Activated CD4-positive, alpha-beta T cell treated with anti-CD3 and anti-CD28 coated beads for 36 hours (primary cell): ENCODE measurements at regions of chr22 and their contacts with region 1.

Region 1: GRCh38 chr22:30423982-30424963 is 1.3 kb upstream of the MTFP1 start:
- DNase-seq: peak; percentile 99
- ATAC-seq: peak; percentile 85
- H3K4me3 Mint-ChIP-seq: peak overlapping the region; percentile 93
- H3K27ac Mint-ChIP-seq: peak overlapping the region; percentile 97
- H3K4me1 Mint-ChIP-seq: peaks cover 49% of the 10 kb centered on the region
- H3K27me3 Mint-ChIP-seq: no peaks in the 10 kb centered on the region

Region 2: DNA sequence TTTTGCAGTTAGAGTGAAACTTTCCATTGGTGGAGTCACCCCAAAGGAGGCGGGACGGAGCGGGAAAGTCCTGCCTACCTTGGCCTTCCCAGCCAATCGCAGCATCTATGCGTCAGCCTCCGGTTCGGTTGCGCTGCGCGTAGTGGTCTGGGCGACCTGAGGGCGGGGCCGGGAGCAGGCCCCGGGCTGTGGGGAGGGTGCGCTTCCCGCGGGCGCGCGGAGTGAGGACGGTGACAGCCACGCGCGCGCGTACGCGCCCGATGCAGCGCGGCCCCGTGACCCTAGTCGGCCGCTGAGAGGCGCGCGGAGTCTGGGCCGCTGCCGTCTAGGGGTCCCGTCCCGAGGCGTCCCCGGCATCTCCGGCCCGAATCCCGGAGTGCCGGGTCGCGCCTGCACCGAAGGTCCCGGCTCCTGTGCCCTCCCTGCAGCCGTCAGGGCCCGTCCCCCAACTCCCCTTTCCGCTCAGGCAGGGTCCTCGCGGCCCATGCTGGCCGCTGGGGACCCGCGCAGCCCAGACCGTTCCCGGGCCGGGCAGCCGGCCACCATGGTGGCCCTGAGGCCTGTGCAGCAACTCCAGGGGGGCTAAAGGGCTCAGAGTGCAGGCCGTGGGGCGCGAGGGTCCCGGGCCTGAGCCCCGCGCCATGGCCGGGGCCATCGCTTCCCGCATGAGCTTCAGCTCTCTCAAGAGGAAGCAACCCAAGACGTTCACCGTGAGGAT is 820.8 kb before region 1 on chr22 and contains the start of gene NF2:
- CTCF ChIA-PET with region 1: interaction called, 3 read pairs
- POLR2A ChIA-PET with region 1: no interaction called
- intact Hi-C with region 1: loop called in 1 of 2 experiments (anchors 5 kb)
- DNase-seq: peak; percentile 99
- ATAC-seq: peak; percentile 97
- H3K4me3 Mint-ChIP-seq: peak within 1 kb of the TSS; percentile 92
- H3K27ac Mint-ChIP-seq: peak within 1 kb of the TSS; percentile 97
- H3K4me1 Mint-ChIP-seq: peaks cover 29% of the 10 kb centered on the region
- H3K27me3 Mint-ChIP-seq: no peaks in the 10 kb centered on the region
- total RNA-seq, gene NF2: 40.2 to 43.1 TPM

Region 3: GRCh38 chr22:30289134-30289979 is 134.9 kb before region 1 on chr22 and contains the start of gene CASTOR1:
- CTCF ChIA-PET with region 1: interaction called, 50 read pairs
- POLR2A ChIA-PET with region 1: no interaction called
- intact Hi-C with region 1: loop called in 1 of 2 experiments (anchors 1 kb)
- DNase-seq: peak; percentile 93
- ATAC-seq: peak; percentile 88
- H3K4me3 Mint-ChIP-seq: peak within 1 kb of the TSS; percentile 72
- H3K27ac Mint-ChIP-seq: peak within 1 kb of the TSS; percentile 72
- H3K4me1 Mint-ChIP-seq: peaks cover 23% of the 10 kb centered on the region
- H3K27me3 Mint-ChIP-seq: no peaks in the 10 kb centered on the region
- total RNA-seq, gene CASTOR1: 1.6 to 2.2 TPM

Region 4: DNA sequence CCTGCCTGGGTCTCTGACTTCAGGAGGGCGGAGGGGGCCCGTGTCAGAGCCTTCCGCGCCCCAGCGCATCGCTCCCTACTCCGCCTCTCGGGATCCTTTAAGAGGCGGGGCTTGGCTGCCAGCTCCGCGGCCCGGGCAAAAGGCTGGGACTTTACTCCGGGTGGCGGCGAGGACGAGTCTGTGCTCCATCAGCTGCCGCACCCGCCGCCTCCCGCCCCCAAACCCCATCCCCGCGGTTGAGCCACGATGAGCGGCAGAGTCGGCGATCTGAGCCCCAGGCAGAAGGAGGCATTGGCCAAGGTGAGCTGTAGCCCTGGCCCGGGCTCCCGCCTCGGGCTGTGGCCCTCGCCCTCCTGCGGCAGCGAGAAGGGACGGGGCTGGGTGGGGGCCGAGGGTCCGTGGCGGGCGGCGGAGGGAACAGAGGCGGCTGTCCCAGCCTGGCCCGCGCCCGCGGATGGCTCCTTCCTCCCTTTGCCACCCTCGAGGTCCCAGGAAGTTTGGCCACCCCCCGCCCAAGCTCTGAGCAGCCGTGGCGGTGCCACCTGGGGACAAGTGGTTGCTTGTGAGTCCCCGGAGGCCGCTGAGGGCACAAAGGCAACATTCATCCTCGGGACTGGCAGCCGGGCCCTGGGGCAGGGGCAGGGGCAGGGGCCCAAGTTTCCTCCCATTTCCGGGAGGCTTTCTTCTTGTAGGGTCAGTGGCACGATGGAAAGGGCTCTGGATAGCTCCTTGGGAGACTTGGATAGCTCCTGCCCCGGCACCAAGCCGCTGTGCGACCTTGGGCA is 27.2 kb before region 1 on chr22 and contains the start of gene SEC14L2:
- CTCF ChIA-PET with region 1: interaction called, 90 read pairs
- POLR2A ChIA-PET with region 1: interaction called, 18 read pairs
- intact Hi-C with region 1: loop called in 1 of 2 experiments (anchors 1 kb)
- DNase-seq: peak; percentile 84
- ATAC-seq: peak; percentile 91
- H3K4me3 Mint-ChIP-seq: peak within 1 kb of the TSS; percentile 83
- H3K27ac Mint-ChIP-seq: peak within 1 kb of the TSS; percentile 56
- H3K4me1 Mint-ChIP-seq: peaks cover 36% of the 10 kb centered on the region
- H3K27me3 Mint-ChIP-seq: no peaks in the 10 kb centered on the region
- total RNA-seq, gene SEC14L2: 13.8 to 18.2 TPM

Region 5: DNA sequence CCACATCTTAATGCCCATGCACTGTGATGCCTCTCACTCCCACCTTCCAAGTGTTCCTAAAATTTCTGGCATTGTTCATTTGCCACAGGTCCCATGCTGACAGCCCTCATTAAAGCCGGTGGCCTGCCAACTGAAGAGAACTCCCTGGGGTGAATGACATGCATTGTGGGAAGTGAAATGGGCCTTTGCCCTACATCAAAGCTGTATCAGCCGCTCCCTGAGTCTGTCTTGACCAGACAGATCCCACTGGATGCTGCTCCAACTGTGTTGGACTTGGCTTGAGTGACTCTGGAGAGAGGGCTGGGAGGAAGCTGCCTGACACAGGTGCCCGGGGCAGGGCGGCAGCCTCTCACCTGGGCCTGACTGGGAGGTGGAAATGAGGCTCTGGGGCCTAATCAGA is 90.0 kb after region 1 on chr22:
- CTCF ChIA-PET with region 1: no interaction called
- POLR2A ChIA-PET with region 1: no interaction called
- intact Hi-C with region 1: no loop called
- DNase-seq: no peak
- ATAC-seq: no peak
- H3K4me3 Mint-ChIP-seq: no peak overlapping the region
- H3K27ac Mint-ChIP-seq: no peak overlapping the region
- H3K4me1 Mint-ChIP-seq: no peaks in the 10 kb centered on the region
- H3K27me3 Mint-ChIP-seq: no peaks in the 10 kb centered on the region

Region 6: DNA sequence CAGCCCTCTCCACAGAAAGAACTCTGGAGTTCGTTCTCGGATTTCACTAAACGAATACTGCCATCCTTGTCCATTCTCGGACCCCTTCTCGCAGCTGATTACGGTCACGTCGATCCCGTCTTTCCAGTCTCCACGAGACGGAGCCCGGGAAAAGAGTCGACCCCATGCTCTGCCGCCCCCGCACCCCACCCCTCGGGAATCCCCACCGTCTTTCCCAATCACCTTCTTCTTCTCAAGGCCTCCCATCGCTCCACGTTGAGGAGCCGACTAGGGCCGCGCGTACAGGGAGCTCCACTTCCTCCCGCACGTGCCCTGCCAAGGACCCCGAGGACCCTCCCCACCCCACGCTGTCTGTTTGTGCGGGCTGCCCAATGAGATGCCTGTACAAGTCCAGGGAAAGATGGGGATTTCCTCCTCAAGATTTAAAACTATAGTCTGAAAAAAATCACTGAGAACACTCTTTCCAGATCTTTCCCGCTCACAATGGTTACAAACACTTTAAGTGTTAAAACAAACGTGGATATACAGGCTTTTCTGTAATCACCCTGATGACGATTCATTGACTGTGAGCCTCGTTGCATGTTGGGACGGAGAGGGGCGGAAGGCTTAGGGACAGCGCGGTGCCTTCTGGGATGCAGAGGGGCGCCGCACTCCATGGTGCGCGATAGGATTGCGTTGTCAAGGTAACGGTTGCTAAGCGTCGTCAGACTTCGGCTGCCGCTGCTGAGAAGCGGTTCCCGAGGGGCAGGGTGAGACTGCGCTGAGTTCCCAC is 167.5 kb after region 1 on chr22 and contains the start of gene PES1:
- CTCF ChIA-PET with region 1: interaction called, 5 read pairs
- POLR2A ChIA-PET with region 1: no interaction called
- intact Hi-C with region 1: loop called in 1 of 2 experiments (anchors 1 kb)
- DNase-seq: peak; percentile 96
- ATAC-seq: peak; percentile 100
- H3K4me3 Mint-ChIP-seq: no peak within 1 kb of the TSS
- H3K27ac Mint-ChIP-seq: no peak within 1 kb of the TSS
- H3K4me1 Mint-ChIP-seq: no peaks in the 10 kb centered on the region
- H3K27me3 Mint-ChIP-seq: peaks cover 4% of the 10 kb centered on the region
- total RNA-seq, gene PES1: 134 to 137 TPM

Region 7: GRCh38 chr22:30968924-30969539 is 544.8 kb after region 1 on chr22 and contains the start of gene TUG1:
- CTCF ChIA-PET with region 1: no interaction called
- POLR2A ChIA-PET with region 1: interaction called, 3 read pairs
- intact Hi-C with region 1: loop called in 1 of 2 experiments (anchors 1 kb)
- DNase-seq: peak; percentile 99
- ATAC-seq: peak; percentile 93
- H3K4me3 Mint-ChIP-seq: peak within 1 kb of the TSS; percentile 90
- H3K27ac Mint-ChIP-seq: peak within 1 kb of the TSS; percentile 95
- H3K4me1 Mint-ChIP-seq: peaks cover 51% of the 10 kb centered on the region
- H3K27me3 Mint-ChIP-seq: no peaks in the 10 kb centered on the region
- total RNA-seq, gene TUG1: 46.8 to 56.4 TPM